ENCODE measurements at regions of chr11 and their contacts with region 1.

Region 1: GRCh38 chr11:31509429-31510345 is at the starts of genes ELP4 and IMMP1L:
- DNase-seq: peak; percentile 97
- H3K4me3 Mint-ChIP-seq: peak within 1 kb of the TSS; percentile 97
- H3K27ac Mint-ChIP-seq: peak within 1 kb of the TSS; percentile 88
- H3K4me1 Mint-ChIP-seq: peaks cover 30% of the 10 kb centered on the region
- H3K27me3 Mint-ChIP-seq: no peaks in the 10 kb centered on the region
- total RNA-seq, gene ELP4: 18.3 to 18.5 TPM
- total RNA-seq, gene IMMP1L: 20.4 to 21.8 TPM

Region 2: DNA sequence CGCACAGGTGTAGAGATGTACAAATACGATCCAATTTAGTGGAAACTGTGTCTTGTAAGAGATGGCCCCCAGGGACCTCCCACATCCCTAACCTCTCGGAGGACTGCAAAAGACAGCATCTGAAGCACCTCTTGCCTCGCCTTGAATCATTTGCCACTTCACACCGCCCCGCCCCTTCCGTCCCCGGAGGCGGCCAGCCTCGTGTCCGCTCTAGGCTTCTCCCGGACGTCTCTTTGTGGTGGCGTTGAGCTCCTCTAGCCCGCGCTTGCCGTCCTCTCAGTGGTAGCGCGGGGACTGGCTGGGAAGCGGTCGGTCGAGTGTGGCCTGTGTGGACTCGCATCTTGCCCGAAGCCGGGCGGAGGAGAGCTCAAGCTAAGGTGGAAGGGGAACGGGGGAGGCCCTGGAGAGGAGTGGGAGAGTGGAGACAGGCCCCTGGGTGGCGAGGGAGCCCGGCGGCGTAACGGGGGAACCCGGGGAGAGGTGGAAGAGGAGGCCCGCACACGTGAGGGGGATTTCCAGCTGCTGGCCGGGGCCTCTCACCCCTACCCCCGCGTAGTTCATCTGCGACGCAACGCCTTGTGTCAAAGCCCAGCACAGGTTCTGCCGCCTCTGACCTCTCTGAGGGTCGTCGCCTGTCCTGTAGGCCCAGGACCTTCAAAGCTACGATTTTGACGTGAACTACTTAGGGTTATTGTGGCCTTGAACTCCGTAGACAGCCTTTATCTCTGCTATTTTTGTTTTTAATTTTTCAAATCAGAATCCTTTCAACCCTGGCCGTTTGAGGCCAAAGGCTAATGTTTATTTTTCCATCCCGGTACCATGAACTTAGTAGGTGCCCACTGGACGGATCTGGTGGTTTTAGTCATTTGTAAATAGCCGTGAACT is 1186.6 kb before region 1 on chr11 and contains the start of gene ARL14EP:
- CTCF ChIA-PET with region 1: no interaction called
- POLR2A ChIA-PET with region 1: no interaction called
- intact Hi-C with region 1: loop called (anchors 10 kb)
- DNase-seq: peak; percentile 93
- H3K4me3 Mint-ChIP-seq: peak within 1 kb of the TSS; percentile 99
- H3K27ac Mint-ChIP-seq: peak within 1 kb of the TSS; percentile 99
- H3K4me1 Mint-ChIP-seq: peaks cover 41% of the 10 kb centered on the region
- H3K27me3 Mint-ChIP-seq: peaks cover 5% of the 10 kb centered on the region
- total RNA-seq, gene ARL14EP: 25.0 to 31.0 TPM

Region 3: GRCh38 chr11:31262761-31263160 is 246.9 kb before region 1 on chr11:
- CTCF ChIA-PET with region 1: no interaction called
- POLR2A ChIA-PET with region 1: no interaction called
- intact Hi-C with region 1: no loop called
- DNase-seq: no peak
- H3K4me3 Mint-ChIP-seq: no peak overlapping the region
- H3K27ac Mint-ChIP-seq: no peak overlapping the region
- H3K4me1 Mint-ChIP-seq: no peaks in the 10 kb centered on the region
- H3K27me3 Mint-ChIP-seq: no peaks in the 10 kb centered on the region

Region 4: GRCh38 chr11:31487848-31488247 is 21.8 kb before region 1 on chr11:
- CTCF ChIA-PET with region 1: no interaction called
- POLR2A ChIA-PET with region 1: no interaction called
- intact Hi-C with region 1: no loop called
- DNase-seq: no peak
- H3K4me3 Mint-ChIP-seq: no peak overlapping the region
- H3K27ac Mint-ChIP-seq: no peak overlapping the region
- H3K4me1 Mint-ChIP-seq: peaks cover 16% of the 10 kb centered on the region
- H3K27me3 Mint-ChIP-seq: no peaks in the 10 kb centered on the region

Region 5: GRCh38 chr11:31529701-31530100 is 20.0 kb after region 1 on chr11:
- CTCF ChIA-PET with region 1: no interaction called
- POLR2A ChIA-PET with region 1: no interaction called
- intact Hi-C with region 1: no loop called
- DNase-seq: no peak
- H3K4me3 Mint-ChIP-seq: no peak overlapping the region
- H3K27ac Mint-ChIP-seq: no peak overlapping the region
- H3K4me1 Mint-ChIP-seq: no peaks in the 10 kb centered on the region
- H3K27me3 Mint-ChIP-seq: no peaks in the 10 kb centered on the region

Region 6: DNA sequence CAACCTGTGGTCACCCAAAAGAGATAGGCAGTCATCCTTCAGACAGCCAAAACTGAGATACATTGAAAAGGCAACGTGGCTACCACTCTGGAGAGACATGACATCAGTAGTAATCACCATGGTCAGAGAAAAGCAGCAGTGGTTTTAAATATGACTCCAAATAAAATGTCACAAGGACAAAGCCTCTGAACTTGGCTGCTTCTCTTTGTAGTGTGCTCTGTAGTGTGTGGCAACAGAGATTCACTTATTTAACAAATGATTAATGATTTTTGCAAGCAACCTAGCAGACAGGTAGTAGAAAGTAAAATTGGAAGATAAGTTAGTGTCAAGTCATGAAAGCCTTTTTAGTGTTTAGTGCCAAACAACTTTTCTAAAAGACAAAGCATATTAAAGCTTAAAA is 237.9 kb after region 1 on chr11:
- CTCF ChIA-PET with region 1: no interaction called
- POLR2A ChIA-PET with region 1: no interaction called
- intact Hi-C with region 1: no loop called
- DNase-seq: no peak
- H3K4me3 Mint-ChIP-seq: no peak overlapping the region
- H3K27ac Mint-ChIP-seq: no peak overlapping the region
- H3K4me1 Mint-ChIP-seq: no peaks in the 10 kb centered on the region
- H3K27me3 Mint-ChIP-seq: no peaks in the 10 kb centered on the region

Region 7: DNA sequence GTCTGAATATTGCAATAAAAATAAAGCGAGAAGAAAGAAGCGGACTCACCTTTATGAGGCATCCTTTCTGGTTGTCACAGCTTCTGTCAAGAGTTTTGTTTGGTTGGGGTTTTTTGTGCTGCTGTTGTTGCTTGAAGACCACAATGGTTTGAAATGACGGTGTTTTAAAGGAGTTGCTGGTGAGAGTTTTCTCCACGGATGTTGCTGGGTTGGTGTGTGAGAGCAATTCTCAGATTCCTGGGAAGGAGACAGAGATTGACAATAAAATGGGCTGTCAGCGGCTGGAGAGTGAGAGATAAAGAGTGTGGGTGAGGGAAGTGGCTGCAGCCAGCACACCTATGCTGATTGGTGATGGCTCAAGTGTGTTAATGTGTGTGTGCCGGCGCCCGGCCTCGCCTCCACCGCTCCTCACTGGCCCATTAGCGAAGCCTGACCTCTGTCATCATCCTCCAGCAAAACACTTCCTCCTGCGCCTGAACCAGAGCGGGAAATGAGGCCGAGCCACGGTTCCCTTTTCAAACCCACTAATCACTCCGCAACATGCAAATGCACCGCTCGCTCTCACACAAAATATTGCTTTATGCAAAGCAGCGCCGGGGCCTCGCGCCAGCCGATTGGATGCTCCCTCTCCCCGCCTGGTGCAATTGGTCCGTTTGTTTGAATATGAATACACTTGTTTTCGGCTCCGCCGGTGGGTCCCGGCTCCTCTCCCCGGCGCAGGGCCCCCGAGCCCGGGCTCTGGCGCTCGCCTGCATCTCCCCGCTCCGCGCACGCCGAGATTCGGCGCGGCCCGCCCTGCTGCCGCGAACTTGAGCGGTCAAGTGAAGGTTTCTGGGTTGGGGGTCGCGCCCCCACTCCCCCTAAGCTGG is 301.3 kb after region 1 on chr11 and contains the start of gene PAX6:
- CTCF ChIA-PET with region 1: no interaction called
- POLR2A ChIA-PET with region 1: no interaction called
- intact Hi-C with region 1: loop called (anchors 5 kb)
- DNase-seq: peak; percentile 69
- H3K4me3 Mint-ChIP-seq: peak within 1 kb of the TSS; percentile 66
- H3K27ac Mint-ChIP-seq: no peak within 1 kb of the TSS
- H3K4me1 Mint-ChIP-seq: peaks cover 41% of the 10 kb centered on the region
- H3K27me3 Mint-ChIP-seq: peaks cover 74% of the 10 kb centered on the region
- total RNA-seq, gene PAX6: not detected